ENCODE measurements at regions of chr15 and their contacts with region 1.

Region 1: DNA sequence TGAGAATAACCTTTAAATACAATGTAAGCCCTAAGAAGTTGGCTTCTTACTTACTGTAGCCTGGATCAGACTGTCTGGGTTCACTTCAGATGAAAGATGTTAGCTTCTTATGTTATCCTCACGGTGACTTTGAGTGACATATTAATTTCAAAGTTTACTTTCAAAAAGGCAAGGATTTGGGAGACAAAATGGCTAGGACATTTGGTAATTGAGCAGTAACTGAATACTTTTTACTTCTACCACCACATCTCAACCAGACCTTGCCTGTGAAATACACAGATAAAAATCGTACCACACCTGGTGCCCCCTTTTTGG is 36.0 kb upstream of the BNIP2 start:
- DNase-seq: no peak
- CTCF ChIP-seq: no peak

Region 2: GRCh38 chr15:59711451-59712243 is 13.5 kb before region 1 on chr15:
- CTCF ChIA-PET with region 1: interaction called, 15 read pairs
- POLR2A ChIA-PET with region 1: no interaction called
- DNase-seq: no peak
- CTCF ChIP-seq: no peak

Region 3: GRCh38 chr15:60179786-60180391 is 454.8 kb after region 1 on chr15:
- CTCF ChIA-PET with region 1: interaction called, 14 read pairs
- POLR2A ChIA-PET with region 1: no interaction called
- DNase-seq: peak; percentile 21
- CTCF ChIP-seq: peak; percentile 79

Region 4: DNA sequence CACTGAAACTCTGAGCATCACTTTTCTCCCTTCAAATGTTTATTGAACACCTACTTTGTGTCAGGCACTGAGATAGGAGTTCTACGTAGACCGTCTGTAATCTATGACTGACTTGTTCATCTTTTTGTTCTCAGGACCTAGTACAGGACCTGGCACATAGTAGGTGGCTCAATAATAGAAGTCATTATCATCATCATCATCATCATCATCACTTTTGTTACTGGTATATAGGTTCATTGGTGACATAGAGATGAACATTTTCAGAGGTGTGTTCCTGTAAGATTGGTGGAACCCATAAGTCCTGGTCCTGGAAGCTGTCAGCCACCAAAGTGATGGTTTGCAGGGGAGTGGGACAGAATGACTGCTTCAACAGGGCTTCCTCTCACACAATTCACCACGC is 567.4 kb after region 1 on chr15:
- CTCF ChIA-PET with region 1: no interaction called
- POLR2A ChIA-PET with region 1: no interaction called
- DNase-seq: no peak
- CTCF ChIP-seq: no peak

Region 5: DNA sequence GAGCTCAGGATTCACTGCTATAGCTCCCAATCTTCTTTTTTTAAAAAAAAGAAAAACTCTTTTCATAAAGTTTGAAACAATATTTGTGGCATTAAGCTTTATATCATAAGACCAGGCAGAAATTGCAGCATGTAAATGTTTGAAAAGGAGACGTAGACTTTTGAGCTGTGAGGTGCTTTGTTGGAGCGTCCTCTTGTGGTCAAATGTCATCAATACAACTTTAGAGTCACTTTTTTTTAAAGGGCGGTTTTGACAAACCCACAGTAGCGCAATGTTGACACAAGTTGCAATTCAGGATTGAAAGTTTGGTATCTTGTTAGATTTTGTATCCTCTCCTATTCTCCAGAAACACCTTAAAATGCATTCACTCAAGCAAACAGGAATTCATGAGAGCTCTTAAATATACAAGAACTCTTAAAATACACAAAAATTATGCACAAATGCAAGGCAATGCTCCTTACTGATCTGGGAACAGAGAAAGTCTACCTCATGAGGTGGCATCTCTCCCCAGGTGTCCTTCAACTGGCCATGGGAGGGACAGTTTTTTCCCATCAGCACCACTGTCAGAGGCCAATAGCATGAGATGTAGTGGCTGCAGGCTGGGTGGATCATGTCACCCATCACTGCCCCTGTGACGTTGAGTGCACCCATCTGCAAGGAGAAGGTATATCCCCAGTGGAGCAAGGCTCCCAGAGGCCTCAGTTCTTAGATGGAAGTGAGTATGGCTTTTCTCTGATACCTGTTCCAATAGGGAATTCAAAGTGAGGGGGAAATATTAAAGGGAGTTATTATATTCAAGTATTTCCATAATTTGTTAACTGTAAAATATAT is 601.9 kb after region 1 on chr15:
- CTCF ChIA-PET with region 1: interaction called, 64 read pairs
- POLR2A ChIA-PET with region 1: no interaction called
- DNase-seq: peak; percentile 29
- CTCF ChIP-seq: peak; percentile 66

Measured in GM10248 (cell line).